ENCODE measurements at regions of chr2 and their contacts with region 1.

Region 1: GRCh38 chr2:179422037-179422643 is 157.5 kb upstream of the SESTD1 start:
- DNase-seq: peak; percentile 65 to 84 (median 73)
- H3K4me3 ChIP-seq: no peak overlapping the region
- H3K27ac ChIP-seq: no peak overlapping the region
- H3K4me1 ChIP-seq: peaks cover 0 to 4% (median 0%) of the 10 kb centered on the region in 3 donors
- H3K27me3 ChIP-seq: no peaks in the 10 kb centered on the region
- CTCF ChIP-seq: peak; percentile 81

Region 2: DNA sequence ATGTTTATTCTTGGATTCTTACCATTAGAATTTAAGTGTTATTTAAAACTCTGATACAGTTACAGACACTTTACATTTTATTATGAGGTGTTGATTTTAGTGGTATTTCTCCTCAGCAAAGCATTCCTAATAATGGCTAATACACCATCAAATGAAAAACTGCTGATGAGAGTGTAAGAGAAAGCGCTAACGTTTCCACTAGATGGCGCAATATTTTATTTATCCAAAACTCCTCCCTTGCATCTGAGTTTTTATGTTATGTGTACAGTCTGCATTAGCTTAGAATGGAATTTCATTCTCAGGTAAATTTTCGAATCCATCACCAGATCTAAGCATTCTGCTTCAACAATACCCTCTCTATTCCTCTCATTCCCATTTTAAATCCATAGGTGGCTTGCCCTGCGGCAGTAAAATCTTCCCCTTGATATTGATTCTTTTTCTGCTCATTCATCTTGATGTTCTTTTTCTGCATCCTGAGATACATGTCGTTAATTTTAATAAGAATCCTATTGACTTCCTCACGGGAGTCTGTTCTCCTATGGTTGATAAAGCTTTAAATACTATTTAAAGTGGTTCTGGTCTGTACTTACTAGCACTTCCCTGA is 1025.0 kb before region 1 on chr2:
- intact Hi-C with region 1: no loop called
- DNase-seq: peak in 2 of 5 donors; percentile 58 to 68
- H3K4me3 ChIP-seq: no peak overlapping the region
- H3K27ac ChIP-seq: no peak overlapping the region
- H3K4me1 ChIP-seq: no peaks in the 10 kb centered on the region
- H3K27me3 ChIP-seq: no peaks in the 10 kb centered on the region
- CTCF ChIP-seq: peak; percentile 47

Region 3: GRCh38 chr2:178910001-178910400 is 512.1 kb before region 1 on chr2:
- intact Hi-C with region 1: no loop called
- DNase-seq: no peak
- H3K4me3 ChIP-seq: no peak overlapping the region
- H3K27ac ChIP-seq: no peak overlapping the region
- H3K4me1 ChIP-seq: no peaks in the 10 kb centered on the region
- H3K27me3 ChIP-seq: no peaks in the 10 kb centered on the region
- CTCF ChIP-seq: no peak

Region 4: GRCh38 chr2:179749210-179749609 is 327.1 kb after region 1 on chr2:
- intact Hi-C with region 1: loop called (anchors 10 kb)
- DNase-seq: no peak
- H3K4me3 ChIP-seq: no peak overlapping the region
- H3K27ac ChIP-seq: no peak overlapping the region
- H3K4me1 ChIP-seq: no peaks in the 10 kb centered on the region
- H3K27me3 ChIP-seq: no peaks in the 10 kb centered on the region
- CTCF ChIP-seq: no peak

Measured in kidney (tissue), 22 donors.